ENCODE measurements at regions of chr6 and their contacts with region 1.

Region 1: GRCh38 chr6:154276810-154277628 is 79.6 kb downstream of the IPCEF1 start:
- DNase-seq: peak; percentile 50
- CTCF ChIP-seq: peak; percentile 54

Region 2: DNA sequence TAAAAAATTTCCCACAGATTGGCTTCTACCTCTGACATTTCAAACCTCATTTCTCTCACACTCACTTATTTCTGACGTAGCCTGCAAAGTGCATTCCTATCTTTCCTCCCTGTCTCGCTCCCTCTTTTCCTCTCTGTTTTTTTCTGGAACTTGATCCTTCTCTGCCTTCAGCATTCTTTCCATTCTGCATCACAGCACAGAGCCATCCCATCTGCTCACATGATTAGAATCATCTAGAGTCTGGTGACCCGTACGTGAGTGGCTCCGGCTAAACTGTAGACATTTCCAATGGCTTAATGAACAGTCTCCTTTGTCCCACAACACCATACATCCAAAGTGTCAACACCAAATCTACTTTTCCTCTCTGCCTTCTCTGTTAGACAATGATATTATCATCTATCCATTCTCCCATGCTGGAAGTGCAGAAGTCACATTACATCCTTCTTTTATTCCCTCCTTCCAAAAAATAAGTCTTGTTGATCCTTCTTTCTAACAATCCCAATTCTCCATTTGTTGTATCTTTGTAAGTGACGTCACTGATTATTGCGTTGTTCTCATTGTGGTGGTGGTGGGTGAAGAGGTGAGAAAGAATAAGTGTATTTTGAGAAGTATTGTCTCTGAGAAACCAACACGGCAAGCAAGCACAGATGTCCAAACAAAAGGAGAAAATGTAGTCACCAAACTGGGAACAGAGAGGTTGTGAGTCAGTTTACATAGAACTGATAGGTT is 196.4 kb before region 1 on chr6:
- CTCF ChIA-PET with region 1: no interaction called
- POLR2A ChIA-PET with region 1: no interaction called
- DNase-seq: no peak
- CTCF ChIP-seq: no peak

Region 3: DNA sequence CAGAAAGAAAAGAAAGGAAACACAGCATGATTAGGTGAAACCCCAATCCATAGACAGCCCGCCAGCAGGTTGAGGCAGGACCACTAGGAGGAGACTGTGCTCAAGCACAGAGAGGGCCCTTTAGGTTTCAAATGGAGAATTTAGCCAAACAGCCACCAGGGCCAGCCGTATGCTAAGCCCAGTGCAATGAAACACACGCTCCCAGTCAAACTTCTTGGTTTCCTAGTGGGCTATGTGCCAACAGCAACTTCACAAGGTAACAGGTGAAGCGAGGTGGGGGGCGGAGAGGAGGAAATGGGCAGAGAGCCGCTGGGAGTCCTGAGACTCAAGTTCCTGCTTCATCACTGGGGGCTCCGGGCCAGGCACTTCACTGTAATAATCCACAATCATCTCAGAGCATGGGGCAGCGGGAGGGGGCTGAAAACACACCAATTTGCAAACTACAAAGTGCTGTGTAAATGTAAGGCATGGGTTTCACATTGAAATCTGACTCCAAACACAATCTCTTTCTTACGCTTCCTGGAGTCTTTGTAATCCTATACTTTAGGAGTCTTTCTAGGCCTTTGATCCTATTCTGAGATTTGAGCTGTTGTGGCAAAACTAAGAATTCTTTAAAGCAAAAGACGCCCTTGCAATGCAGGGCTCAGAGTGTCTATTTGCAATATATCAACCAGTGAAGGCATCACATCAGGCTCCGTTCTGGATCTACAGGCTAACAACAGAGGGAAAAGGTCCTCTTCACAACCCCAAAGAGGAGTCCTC is 120.7 kb before region 1 on chr6:
- CTCF ChIA-PET with region 1: interaction called, 54 read pairs
- POLR2A ChIA-PET with region 1: no interaction called
- DNase-seq: peak; percentile 37
- CTCF ChIP-seq: peak; percentile 58

Region 4: GRCh38 chr6:154164397-154165165 is 112.4 kb before region 1 on chr6:
- CTCF ChIA-PET with region 1: interaction called, 54 read pairs
- POLR2A ChIA-PET with region 1: no interaction called
- DNase-seq: no peak
- CTCF ChIP-seq: no peak

Region 5: GRCh38 chr6:154247119-154247861 is 29.7 kb before region 1 on chr6:
- CTCF ChIA-PET with region 1: interaction called, 11 read pairs
- POLR2A ChIA-PET with region 1: no interaction called
- DNase-seq: no peak
- CTCF ChIP-seq: no peak

Region 6: GRCh38 chr6:154359161-154359574 is 82.1 kb after region 1 on chr6:
- CTCF ChIA-PET with region 1: no interaction called
- POLR2A ChIA-PET with region 1: no interaction called
- DNase-seq: no peak
- CTCF ChIP-seq: no peak

Measured in GM10248 (cell line).